Dendritic cell treated with granulocyte-macrophage colony-stimulating factor and Interleukin-4, amounts not matched to agents 40 ng/mL and 50 ng/mL, for 4 days (primary cell): ENCODE measurements at regions of chr9 and their contacts with region 1.

Region 1: DNA sequence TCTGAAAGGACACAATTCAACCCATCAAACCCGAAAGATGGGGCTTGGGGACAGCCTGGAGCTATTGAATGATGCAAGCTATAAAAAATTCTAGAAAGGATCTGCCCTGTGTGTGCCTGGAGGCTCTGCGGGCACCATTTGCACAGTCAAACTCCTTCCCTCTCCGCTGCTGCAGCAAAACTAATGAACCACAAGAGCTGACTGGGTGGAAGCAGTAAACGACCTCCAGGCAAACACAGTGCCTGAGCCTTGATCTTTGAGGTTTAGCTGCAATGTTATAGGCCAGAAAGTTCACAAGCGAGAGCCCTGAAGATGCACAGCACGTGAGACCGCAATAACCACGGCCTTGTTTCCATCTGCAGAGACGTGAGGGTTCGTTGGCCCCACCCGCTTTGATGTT is 69.2 kb upstream of the S1PR3 start:
- H3K4me3 Mint-ChIP-seq: no peak overlapping the region
- H3K27ac Mint-ChIP-seq: no peak overlapping the region
- H3K4me1 Mint-ChIP-seq: peaks cover 42% of the 10 kb centered on the region
- H3K27me3 Mint-ChIP-seq: peaks cover 32% of the 10 kb centered on the region

Region 2: GRCh38 chr9:88835038-88835466 is 87.0 kb before region 1 on chr9:
- intact Hi-C with region 1: loop called (anchors 10 kb)
- H3K4me3 Mint-ChIP-seq: no peak overlapping the region
- H3K27ac Mint-ChIP-seq: no peak overlapping the region
- H3K4me1 Mint-ChIP-seq: peaks cover 30% of the 10 kb centered on the region
- H3K27me3 Mint-ChIP-seq: peaks cover 88% of the 10 kb centered on the region

Region 3: GRCh38 chr9:88957526-88957925 is 35.5 kb after region 1 on chr9:
- intact Hi-C with region 1: no loop called
- H3K4me3 Mint-ChIP-seq: no peak overlapping the region
- H3K27ac Mint-ChIP-seq: no peak overlapping the region
- H3K4me1 Mint-ChIP-seq: peaks cover 20% of the 10 kb centered on the region
- H3K27me3 Mint-ChIP-seq: peaks cover 48% of the 10 kb centered on the region